ENCODE measurements at regions of chr15 and their contacts with region 1.

Region 1: GRCh38 chr15:79923515-79924395 is 26.9 kb upstream of the MTHFS start:
- DNase-seq: peak; percentile 100
- ATAC-seq: peak; percentile 94
- H3K4me3 Mint-ChIP-seq: peak overlapping the region; percentile 93
- H3K27ac Mint-ChIP-seq: peak overlapping the region; percentile 94
- H3K4me1 Mint-ChIP-seq: peaks cover 26% of the 10 kb centered on the region
- H3K27me3 Mint-ChIP-seq: no peaks in the 10 kb centered on the region
- CTCF ChIP-seq: no peak

Region 2: DNA sequence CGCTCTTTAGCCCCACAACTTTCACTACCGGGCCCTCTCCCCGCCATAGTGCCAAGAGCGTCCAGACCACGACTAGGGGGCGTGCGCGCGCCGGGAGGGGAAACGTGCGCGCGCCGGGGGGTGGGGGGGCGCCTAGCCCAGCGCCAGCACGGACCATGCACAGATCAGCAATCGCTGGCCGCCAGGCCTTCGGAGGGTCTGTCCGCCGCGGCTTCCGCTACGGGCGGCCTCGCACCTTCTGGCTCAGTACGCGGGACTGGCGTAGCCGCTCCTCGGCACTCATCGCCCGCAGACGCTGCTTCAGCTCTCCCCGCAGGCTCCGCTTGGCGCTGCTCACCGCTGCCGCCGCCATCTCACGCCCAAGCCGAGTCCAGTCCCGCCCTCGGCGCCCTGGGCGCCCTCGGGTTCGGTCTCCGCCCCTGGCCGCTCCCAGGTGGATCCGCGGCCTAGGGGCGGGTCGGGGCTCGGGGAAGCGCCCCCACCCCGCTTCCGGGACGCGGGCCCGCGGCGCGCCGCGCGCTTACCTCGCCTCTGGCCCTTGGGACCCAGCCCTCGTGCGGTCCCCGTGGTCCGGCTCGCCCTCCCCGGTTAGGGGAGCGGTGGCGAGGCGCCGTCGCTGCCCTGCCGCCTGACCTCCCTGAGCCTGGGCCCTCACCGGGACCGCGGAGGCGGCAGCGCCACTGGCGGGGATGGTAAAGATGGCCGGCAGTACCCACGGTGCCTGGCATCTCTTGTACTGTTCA is 26.9 kb before region 1 on chr15 and contains the start of gene MTHFS:
- CTCF ChIA-PET with region 1: interaction called, 6 read pairs
- POLR2A ChIA-PET with region 1: interaction called, 58 read pairs
- intact Hi-C with region 1: loop called (anchors 1 kb)
- DNase-seq: peak; percentile 76
- ATAC-seq: peak; percentile 87
- H3K4me3 Mint-ChIP-seq: peak within 1 kb of the TSS; percentile 99
- H3K27ac Mint-ChIP-seq: peak within 1 kb of the TSS; percentile 100
- H3K4me1 Mint-ChIP-seq: peaks cover 54% of the 10 kb centered on the region
- H3K27me3 Mint-ChIP-seq: no peaks in the 10 kb centered on the region
- CTCF ChIP-seq: no peak
- total RNA-seq, gene MTHFS: 28.6 and 29.5 TPM in 2 replicates

Region 3: DNA sequence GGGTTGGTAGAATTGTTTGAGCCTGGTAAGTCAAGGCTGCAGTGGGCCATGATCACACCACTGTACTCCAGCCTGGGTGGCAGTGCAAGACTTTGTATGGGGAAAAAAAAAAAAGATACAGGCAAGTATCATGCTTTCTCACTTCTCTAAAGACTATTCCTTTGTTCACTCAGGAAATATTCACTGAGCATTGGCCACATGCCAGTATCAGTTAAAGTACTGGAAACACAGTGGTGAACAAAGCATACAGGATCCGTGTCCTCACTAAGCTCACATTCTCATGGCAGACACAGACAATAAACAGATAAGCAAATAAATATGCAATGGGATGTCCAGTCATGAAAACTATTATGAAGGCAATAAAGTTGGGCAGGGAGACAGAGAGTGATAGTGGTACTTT is 21.8 kb before region 1 on chr15:
- CTCF ChIA-PET with region 1: no interaction called
- POLR2A ChIA-PET with region 1: interaction called, 58 read pairs
- intact Hi-C with region 1: no loop called
- DNase-seq: no peak
- ATAC-seq: no peak
- H3K4me3 Mint-ChIP-seq: no peak overlapping the region
- H3K27ac Mint-ChIP-seq: no peak overlapping the region
- H3K4me1 Mint-ChIP-seq: peaks cover 61% of the 10 kb centered on the region
- H3K27me3 Mint-ChIP-seq: no peaks in the 10 kb centered on the region
- CTCF ChIP-seq: no peak

Region 4: GRCh38 chr15:79948095-79948695 is 24.4 kb after region 1 on chr15:
- CTCF ChIA-PET with region 1: no interaction called
- POLR2A ChIA-PET with region 1: interaction called, 10 read pairs
- intact Hi-C with region 1: no loop called
- DNase-seq: no peak
- ATAC-seq: peak; percentile 40
- H3K4me3 Mint-ChIP-seq: no peak overlapping the region
- H3K27ac Mint-ChIP-seq: no peak overlapping the region
- H3K4me1 Mint-ChIP-seq: peaks cover 10% of the 10 kb centered on the region
- H3K27me3 Mint-ChIP-seq: no peaks in the 10 kb centered on the region
- CTCF ChIP-seq: no peak

Region 5: GRCh38 chr15:79970624-79971434 is 47.1 kb after region 1 on chr15 and contains the start of gene BCL2A1:
- CTCF ChIA-PET with region 1: no interaction called
- POLR2A ChIA-PET with region 1: interaction called, 97 read pairs
- intact Hi-C with region 1: loop called (anchors 1 kb)
- DNase-seq: peak; percentile 33
- ATAC-seq: peak; percentile 83
- H3K4me3 Mint-ChIP-seq: peak within 1 kb of the TSS; percentile 89
- H3K27ac Mint-ChIP-seq: peak within 1 kb of the TSS; percentile 93
- H3K4me1 Mint-ChIP-seq: peaks cover 61% of the 10 kb centered on the region
- H3K27me3 Mint-ChIP-seq: no peaks in the 10 kb centered on the region
- CTCF ChIP-seq: no peak
- total RNA-seq, gene BCL2A1: 181 and 189 TPM in 2 replicates

Region 6: DNA sequence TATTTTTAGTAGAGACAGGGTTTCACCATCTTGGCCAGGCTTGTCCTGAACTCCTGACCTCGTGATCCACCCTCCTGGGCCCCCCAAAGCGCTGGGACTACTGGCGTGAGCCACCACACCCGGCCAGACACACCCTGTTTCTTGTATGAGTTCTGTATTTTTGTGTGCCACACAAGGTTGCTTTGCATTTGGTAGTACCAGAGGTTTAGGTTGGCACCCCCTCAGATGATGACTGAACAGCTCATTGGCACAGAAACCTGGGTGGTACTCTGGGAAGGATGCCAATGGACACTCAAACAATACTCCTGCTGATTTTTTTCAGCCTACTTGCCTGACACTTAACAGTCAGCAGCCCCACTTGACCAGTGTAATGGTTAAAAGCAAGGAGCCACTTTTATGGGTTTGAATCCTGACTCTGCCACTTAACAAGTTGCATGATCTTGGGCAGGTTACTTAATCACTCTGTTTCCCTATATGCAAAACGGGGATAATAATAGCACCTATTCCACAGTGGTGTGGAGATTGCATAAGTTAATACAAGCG is 86.4 kb after region 1 on chr15:
- CTCF ChIA-PET with region 1: no interaction called
- POLR2A ChIA-PET with region 1: interaction called, 16 read pairs
- intact Hi-C with region 1: no loop called
- DNase-seq: no peak
- ATAC-seq: peak; percentile 56
- H3K4me3 Mint-ChIP-seq: peak overlapping the region; percentile 57
- H3K27ac Mint-ChIP-seq: peak overlapping the region; percentile 87
- H3K4me1 Mint-ChIP-seq: peaks cover 73% of the 10 kb centered on the region
- H3K27me3 Mint-ChIP-seq: no peaks in the 10 kb centered on the region
- CTCF ChIP-seq: no peak

Region 7: GRCh38 chr15:80152180-80152845 is 228.6 kb after region 1 on chr15:
- CTCF ChIA-PET with region 1: no interaction called
- POLR2A ChIA-PET with region 1: no interaction called
- intact Hi-C with region 1: loop called (anchors 1 kb)
- DNase-seq: peak; percentile 66
- ATAC-seq: peak; percentile 87
- H3K4me3 Mint-ChIP-seq: peak overlapping the region; percentile 86
- H3K27ac Mint-ChIP-seq: peak overlapping the region; percentile 68
- H3K4me1 Mint-ChIP-seq: peaks cover 15% of the 10 kb centered on the region
- H3K27me3 Mint-ChIP-seq: no peaks in the 10 kb centered on the region
- CTCF ChIP-seq: no peak

Measured in activated B cell treated with CpG ODN at 0.5 μM for 24 hours (primary cell).